Activated CD4-positive, alpha-beta memory T cell treated with anti-CD3 and anti-CD28 coated beads, Interleukin-2, amount 10 ng/mL, durations not matched to agents 7 days and 5 days (primary cell): ENCODE measurements at regions of chr1 and their contacts with region 1.

Region 1: GRCh38 chr1:20493839-20494608 is 8.0 kb upstream of the CAMK2N1 start:
- DNase-seq: peak; percentile 83
- H3K4me3 Mint-ChIP-seq: no peak overlapping the region
- H3K27ac Mint-ChIP-seq: no peak overlapping the region
- H3K4me1 Mint-ChIP-seq: peaks cover 12% of the 10 kb centered on the region
- H3K27me3 Mint-ChIP-seq: peaks cover 9% of the 10 kb centered on the region

Region 2: DNA sequence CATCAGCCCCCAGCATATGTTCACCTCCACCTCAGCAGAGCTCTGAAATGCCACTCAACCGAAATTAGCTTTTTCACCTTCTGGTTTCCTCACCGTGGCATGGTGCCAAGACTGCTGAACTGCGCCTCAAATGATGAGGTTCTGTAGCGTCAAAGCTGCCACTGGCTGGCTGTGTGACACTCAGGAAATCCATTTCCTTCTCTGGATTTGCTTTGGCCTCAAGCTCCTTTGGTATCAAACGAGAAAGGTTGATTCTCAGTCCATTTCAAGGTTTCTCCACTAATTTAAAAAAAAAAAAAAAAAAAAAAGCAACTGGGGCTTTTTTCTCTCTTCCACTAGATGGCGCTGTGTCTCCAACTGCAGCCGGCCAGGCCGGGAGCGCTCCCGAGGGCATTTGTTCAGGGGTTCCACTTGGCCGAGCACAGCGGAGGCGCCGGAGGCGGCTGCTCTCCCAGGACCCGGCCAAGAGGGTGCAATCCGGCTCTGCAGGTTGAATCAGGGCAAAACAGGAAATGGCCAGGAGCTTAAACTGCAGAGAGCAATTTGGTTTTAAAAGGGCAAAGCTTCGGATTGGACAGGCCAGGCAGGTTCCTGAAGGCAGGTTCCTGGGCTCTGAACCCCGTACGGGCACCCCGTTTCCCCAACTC is 281.2 kb before region 1 on chr1:
- CTCF ChIA-PET with region 1: interaction called, 33 read pairs
- POLR2A ChIA-PET with region 1: no interaction called
- DNase-seq: peak; percentile 57
- H3K4me3 Mint-ChIP-seq: no peak overlapping the region
- H3K27ac Mint-ChIP-seq: no peak overlapping the region
- H3K4me1 Mint-ChIP-seq: peaks cover 5% of the 10 kb centered on the region
- H3K27me3 Mint-ChIP-seq: peaks cover 48% of the 10 kb centered on the region

Region 3: GRCh38 chr1:20476265-20477038 is 17.6 kb before region 1 on chr1:
- CTCF ChIA-PET with region 1: no interaction called
- POLR2A ChIA-PET with region 1: no interaction called
- DNase-seq: no peak
- H3K4me3 Mint-ChIP-seq: no peak overlapping the region
- H3K27ac Mint-ChIP-seq: no peak overlapping the region
- H3K4me1 Mint-ChIP-seq: no peaks in the 10 kb centered on the region
- H3K27me3 Mint-ChIP-seq: peaks cover 69% of the 10 kb centered on the region

Region 4: GRCh38 chr1:20507248-20507563 is 13.2 kb after region 1 on chr1:
- CTCF ChIA-PET with region 1: interaction called, 10 read pairs
- POLR2A ChIA-PET with region 1: interaction called, 7 read pairs
- DNase-seq: no peak
- H3K4me3 Mint-ChIP-seq: peak overlapping the region; percentile 82
- H3K27ac Mint-ChIP-seq: peak overlapping the region; percentile 87
- H3K4me1 Mint-ChIP-seq: peaks cover 29% of the 10 kb centered on the region
- H3K27me3 Mint-ChIP-seq: peaks cover 3% of the 10 kb centered on the region

Region 5: GRCh38 chr1:20540281-20540680 is 46.3 kb after region 1 on chr1:
- CTCF ChIA-PET with region 1: no interaction called
- POLR2A ChIA-PET with region 1: no interaction called
- DNase-seq: no peak
- H3K4me3 Mint-ChIP-seq: no peak overlapping the region
- H3K27ac Mint-ChIP-seq: no peak overlapping the region
- H3K4me1 Mint-ChIP-seq: no peaks in the 10 kb centered on the region
- H3K27me3 Mint-ChIP-seq: peaks cover 42% of the 10 kb centered on the region

Region 6: GRCh38 chr1:20702416-20702815 is 208.4 kb after region 1 on chr1:
- CTCF ChIA-PET with region 1: no interaction called
- POLR2A ChIA-PET with region 1: no interaction called
- DNase-seq: no peak
- H3K4me3 Mint-ChIP-seq: no peak overlapping the region
- H3K27ac Mint-ChIP-seq: no peak overlapping the region
- H3K4me1 Mint-ChIP-seq: no peaks in the 10 kb centered on the region
- H3K27me3 Mint-ChIP-seq: peaks cover 3% of the 10 kb centered on the region